Caco-2 (cell line): ENCODE measurements at regions of chr12 and their contacts with region 1.

Region 1: DNA sequence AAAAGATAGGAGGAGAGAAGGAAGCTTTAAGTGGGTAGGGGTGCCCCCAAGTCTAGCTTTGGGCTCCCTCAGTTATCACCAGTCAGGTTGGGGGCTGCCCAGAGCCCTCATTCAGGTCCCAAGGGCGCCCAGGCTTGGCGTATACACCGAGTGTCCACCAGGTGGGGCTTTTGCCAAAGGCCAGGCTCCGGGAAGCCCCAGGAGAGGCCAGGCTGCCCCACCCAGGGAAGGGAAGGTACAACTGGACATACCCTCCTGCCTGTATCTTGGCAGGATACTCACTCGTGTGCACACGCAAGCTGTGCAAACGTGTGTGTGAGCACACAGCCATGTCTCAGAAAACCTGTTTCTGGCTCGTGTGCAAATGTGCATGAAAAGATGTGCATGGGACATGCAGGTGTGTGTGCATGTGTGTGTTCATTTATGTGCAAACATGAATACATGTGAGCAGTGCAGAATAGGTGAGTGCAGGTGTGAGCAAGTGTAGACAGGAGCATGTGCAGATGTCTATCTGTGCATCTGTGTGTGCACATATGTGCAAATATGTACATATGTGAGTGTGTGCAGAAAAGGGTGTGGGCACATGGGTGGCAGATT is 103.9 kb upstream of the MYL2 start:
- DNase-seq: peak; percentile 72 to 80
- H3K4me3 ChIP-seq: no peak overlapping the region
- H3K4me3 Mint-ChIP-seq: no peak overlapping the region
- H3K27ac Mint-ChIP-seq: no peak overlapping the region
- H3K4me1 ChIP-seq: no peaks in the 10 kb centered on the region
- H3K4me1 Mint-ChIP-seq: peaks cover 4% of the 10 kb centered on the region
- H3K27me3 ChIP-seq: no peaks in the 10 kb centered on the region
- H3K27me3 Mint-ChIP-seq: peaks cover 17% of the 10 kb centered on the region
- CTCF ChIP-seq: peak; percentile 82 to 87

Region 2: DNA sequence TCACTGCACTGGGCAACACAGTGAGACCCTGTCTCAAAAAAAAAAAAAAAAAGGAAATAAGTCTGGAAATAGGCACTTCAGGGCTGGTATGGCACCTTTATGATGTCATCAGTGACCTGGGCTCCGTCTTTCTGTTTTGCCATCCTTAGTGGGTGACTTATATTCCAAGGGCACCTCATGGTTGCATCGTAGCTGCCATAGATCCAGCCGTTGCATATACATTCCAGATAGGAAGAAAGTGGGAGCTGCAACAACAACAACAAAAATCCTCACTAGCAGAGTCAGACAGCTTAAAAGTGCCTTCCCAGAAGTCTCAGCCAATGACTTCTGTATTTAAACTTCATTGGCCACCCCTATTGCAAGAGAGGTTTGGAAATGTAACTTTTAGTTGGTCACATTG is 130.3 kb before region 1 on chr12:
- CTCF ChIA-PET with region 1: no interaction called
- POLR2A ChIA-PET with region 1: no interaction called
- intact Hi-C with region 1: loop called (anchors 5 kb)
- DNase-seq: no peak
- H3K4me3 ChIP-seq: no peak overlapping the region
- H3K4me3 Mint-ChIP-seq: peak overlapping the region; percentile 40
- H3K27ac Mint-ChIP-seq: no peak overlapping the region
- H3K4me1 ChIP-seq: 0 out of 2 replicates have a peak, but pooled peaks cover 6% of the 10 kb centered on the region
- H3K4me1 Mint-ChIP-seq: no peaks in the 10 kb centered on the region
- H3K27me3 ChIP-seq: no peaks in the 10 kb centered on the region
- H3K27me3 Mint-ChIP-seq: peaks cover 8% of the 10 kb centered on the region
- CTCF ChIP-seq: no peak

Region 3: DNA sequence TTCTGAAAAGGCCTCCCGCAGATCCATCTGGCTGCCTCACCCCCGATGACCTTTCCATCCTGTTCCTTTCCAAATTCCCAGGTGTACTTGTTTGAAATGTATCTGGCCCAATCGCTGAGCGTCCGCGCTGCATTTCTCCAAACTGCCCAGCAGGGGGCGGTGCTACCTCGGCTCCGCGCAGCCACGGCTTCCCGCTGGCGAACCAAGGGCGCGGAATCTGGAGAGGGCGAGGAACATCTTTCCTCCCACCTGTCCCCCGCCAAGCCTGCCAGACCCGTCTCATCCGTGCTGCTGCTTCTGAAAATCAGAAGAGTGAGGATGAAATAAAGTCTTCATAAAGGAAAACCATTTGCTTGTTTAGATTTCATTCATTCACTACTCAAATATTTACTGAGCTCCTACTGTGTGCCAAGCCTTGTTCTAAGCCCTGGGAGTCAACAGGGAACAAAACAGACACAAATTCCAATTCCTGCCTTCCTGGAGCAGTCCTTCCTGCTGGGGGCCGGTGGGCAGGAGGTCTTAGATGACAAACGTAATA is 87.1 kb before region 1 on chr12:
- CTCF ChIA-PET with region 1: interaction called, 10 read pairs
- POLR2A ChIA-PET with region 1: no interaction called
- intact Hi-C with region 1: no loop called
- DNase-seq: peak; percentile 47 to 78
- H3K4me3 ChIP-seq: no peak overlapping the region
- H3K4me3 Mint-ChIP-seq: peak overlapping the region; percentile 55
- H3K27ac Mint-ChIP-seq: peak overlapping the region; percentile 31
- H3K4me1 ChIP-seq: peaks cover 19% of the 10 kb centered on the region
- H3K4me1 Mint-ChIP-seq: peaks cover 22% of the 10 kb centered on the region
- H3K27me3 ChIP-seq: no peaks in the 10 kb centered on the region
- H3K27me3 Mint-ChIP-seq: no peaks in the 10 kb centered on the region
- CTCF ChIP-seq: peak; percentile 81 to 96

Region 4: GRCh38 chr12:111174251-111174960 is 150.1 kb after region 1 on chr12:
- CTCF ChIA-PET with region 1: interaction called, 7 read pairs
- POLR2A ChIA-PET with region 1: no interaction called
- intact Hi-C with region 1: loop called (anchors 10 kb)
- DNase-seq: peak in 1 of 2 experiments; percentile 24
- H3K4me3 ChIP-seq: no peak overlapping the region
- H3K4me3 Mint-ChIP-seq: no peak overlapping the region
- H3K27ac Mint-ChIP-seq: no peak overlapping the region
- H3K4me1 ChIP-seq: 0 out of 2 replicates have a peak, but pooled peaks cover 3% of the 10 kb centered on the region
- H3K4me1 Mint-ChIP-seq: no peaks in the 10 kb centered on the region
- H3K27me3 ChIP-seq: 0 out of 2 replicates have a peak, but pooled peaks cover 1% of the 10 kb centered on the region
- H3K27me3 Mint-ChIP-seq: peaks cover 27% of the 10 kb centered on the region
- CTCF ChIP-seq: peak in 1 of 2 experiments; percentile 39

Region 5: DNA sequence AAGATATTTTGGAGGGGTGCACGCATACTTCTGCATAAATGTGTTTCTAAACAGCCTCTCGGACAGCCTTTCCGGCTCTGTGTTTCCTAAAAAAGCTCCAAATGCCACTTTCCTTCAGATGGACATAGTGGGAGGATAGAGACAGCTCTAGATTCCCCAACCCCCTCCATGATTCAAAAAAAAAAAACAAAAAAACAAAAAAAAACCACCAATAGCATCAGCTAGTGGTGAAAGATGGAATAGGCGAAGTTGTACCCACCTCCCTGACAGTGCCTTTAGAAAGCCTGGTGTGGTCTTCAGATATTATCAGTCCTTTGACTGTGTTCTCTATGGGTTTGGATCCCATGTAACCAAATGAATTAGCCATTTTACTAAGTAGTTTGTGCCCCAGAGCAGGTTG is 250.5 kb after region 1 on chr12:
- CTCF ChIA-PET with region 1: no interaction called
- POLR2A ChIA-PET with region 1: no interaction called
- intact Hi-C with region 1: loop called (anchors 5 kb)
- DNase-seq: no peak
- H3K4me3 ChIP-seq: no peak overlapping the region
- H3K4me3 Mint-ChIP-seq: no peak overlapping the region
- H3K27ac Mint-ChIP-seq: no peak overlapping the region
- H3K4me1 ChIP-seq: no peaks in the 10 kb centered on the region
- H3K4me1 Mint-ChIP-seq: peaks cover 8% of the 10 kb centered on the region
- H3K27me3 ChIP-seq: no peaks in the 10 kb centered on the region; the same call in 1 of the 2 replicates
- H3K27me3 Mint-ChIP-seq: no peaks in the 10 kb centered on the region
- CTCF ChIP-seq: peak; percentile 40 to 44

Region 6: DNA sequence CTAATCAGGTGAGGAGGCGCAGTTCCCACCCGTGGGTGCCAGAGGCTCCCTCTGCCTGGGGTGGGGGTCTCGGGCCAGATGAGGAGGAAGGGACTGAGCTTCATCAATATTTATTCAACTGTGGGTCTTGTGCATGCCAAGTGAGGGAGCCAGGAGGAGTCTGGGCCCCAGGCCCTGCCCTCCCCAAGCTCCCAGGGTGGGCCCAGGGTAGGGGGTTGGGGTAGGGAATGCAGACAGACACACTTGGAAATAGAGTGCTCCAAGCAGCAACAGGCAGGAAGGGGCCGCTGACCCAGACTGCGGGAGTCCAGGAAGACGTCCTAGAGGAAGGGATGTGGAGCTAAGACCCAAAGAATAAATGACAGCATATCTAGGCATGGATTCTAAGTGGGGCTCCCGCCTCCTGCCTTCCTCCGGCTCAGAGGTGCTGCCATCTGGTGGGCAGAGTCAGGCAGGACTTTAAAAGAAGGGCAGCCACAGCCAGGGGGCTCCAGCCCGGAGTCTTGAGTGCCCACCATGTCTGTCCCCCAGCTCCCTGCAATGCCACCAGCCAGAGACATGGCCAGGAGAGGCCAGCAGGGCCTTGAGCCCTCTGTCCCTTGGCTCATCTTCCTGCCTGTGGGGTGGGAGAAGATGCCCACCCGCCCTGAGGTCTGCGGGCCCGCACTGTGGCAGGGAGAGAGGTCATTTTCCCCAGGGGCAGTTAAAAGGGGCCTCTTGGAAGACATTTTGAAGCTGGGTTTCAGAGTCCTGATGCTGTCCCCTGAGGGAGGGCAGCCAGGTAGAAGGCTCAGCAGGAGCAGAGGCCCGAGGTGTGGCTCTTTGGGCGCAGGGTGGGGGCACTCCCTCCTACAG is 274.5 kb after region 1 on chr12:
- CTCF ChIA-PET with region 1: interaction called, 3 read pairs
- POLR2A ChIA-PET with region 1: no interaction called
- intact Hi-C with region 1: loop called (anchors 1 kb)
- DNase-seq: peak; percentile 55 to 72
- H3K4me3 ChIP-seq: no peak overlapping the region
- H3K4me3 Mint-ChIP-seq: no peak overlapping the region
- H3K27ac Mint-ChIP-seq: no peak overlapping the region
- H3K4me1 ChIP-seq: no peaks in the 10 kb centered on the region
- H3K4me1 Mint-ChIP-seq: no peaks in the 10 kb centered on the region
- H3K27me3 ChIP-seq: no peaks in the 10 kb centered on the region
- H3K27me3 Mint-ChIP-seq: no peaks in the 10 kb centered on the region
- CTCF ChIP-seq: peak; percentile 84 to 91

Region 7: GRCh38 chr12:111313833-111314259 is 289.5 kb after region 1 on chr12:
- CTCF ChIA-PET with region 1: interaction called, 5 read pairs
- POLR2A ChIA-PET with region 1: no interaction called
- intact Hi-C with region 1: loop called (anchors 1 kb)
- DNase-seq: peak; percentile 66 to 79
- H3K4me3 ChIP-seq: no peak overlapping the region
- H3K4me3 Mint-ChIP-seq: no peak overlapping the region
- H3K27ac Mint-ChIP-seq: no peak overlapping the region
- H3K4me1 ChIP-seq: no peaks in the 10 kb centered on the region
- H3K4me1 Mint-ChIP-seq: no peaks in the 10 kb centered on the region
- H3K27me3 ChIP-seq: no peaks in the 10 kb centered on the region
- H3K27me3 Mint-ChIP-seq: peaks cover 17% of the 10 kb centered on the region
- CTCF ChIP-seq: peak; percentile 88 to 93